ENCODE measurements at regions of chr10 and their contacts with region 1.

Region 1: DNA sequence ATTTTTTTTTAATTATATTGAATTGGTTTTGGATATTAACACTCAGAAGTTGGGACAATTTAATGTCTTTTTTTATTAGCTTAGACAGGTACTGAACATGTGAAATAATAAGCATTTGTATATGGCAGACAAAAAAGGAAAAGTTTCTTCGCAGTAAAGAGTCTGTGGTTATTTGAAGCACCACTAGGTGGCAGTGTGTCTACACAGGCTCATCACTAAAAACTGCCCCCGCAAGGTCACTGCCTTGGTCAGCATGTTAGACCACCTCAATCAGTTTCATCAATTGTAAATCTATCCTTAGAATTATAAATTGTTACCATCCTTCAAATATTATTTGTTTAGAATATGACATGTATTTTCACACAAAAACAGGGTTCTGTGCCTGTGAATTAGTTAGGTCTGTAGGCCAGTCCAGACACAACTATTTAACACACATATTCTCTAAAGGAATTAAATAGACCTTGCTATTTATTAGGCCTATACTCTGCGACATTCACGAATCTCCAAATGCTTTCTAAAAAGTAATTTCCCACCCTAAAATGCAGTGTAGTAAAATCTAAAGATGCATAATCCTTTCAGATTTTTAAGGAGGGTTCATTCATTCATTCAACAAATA is 17.0 kb downstream of the PNLIPRP3 start:
- DNase-seq: peak; percentile 29
- ATAC-seq: no peak
- H3K4me3 Mint-ChIP-seq: no peak overlapping the region
- H3K27ac Mint-ChIP-seq: no peak overlapping the region
- H3K4me1 Mint-ChIP-seq: no peaks in the 10 kb centered on the region
- H3K27me3 Mint-ChIP-seq: peaks cover 8% of the 10 kb centered on the region

Region 2: DNA sequence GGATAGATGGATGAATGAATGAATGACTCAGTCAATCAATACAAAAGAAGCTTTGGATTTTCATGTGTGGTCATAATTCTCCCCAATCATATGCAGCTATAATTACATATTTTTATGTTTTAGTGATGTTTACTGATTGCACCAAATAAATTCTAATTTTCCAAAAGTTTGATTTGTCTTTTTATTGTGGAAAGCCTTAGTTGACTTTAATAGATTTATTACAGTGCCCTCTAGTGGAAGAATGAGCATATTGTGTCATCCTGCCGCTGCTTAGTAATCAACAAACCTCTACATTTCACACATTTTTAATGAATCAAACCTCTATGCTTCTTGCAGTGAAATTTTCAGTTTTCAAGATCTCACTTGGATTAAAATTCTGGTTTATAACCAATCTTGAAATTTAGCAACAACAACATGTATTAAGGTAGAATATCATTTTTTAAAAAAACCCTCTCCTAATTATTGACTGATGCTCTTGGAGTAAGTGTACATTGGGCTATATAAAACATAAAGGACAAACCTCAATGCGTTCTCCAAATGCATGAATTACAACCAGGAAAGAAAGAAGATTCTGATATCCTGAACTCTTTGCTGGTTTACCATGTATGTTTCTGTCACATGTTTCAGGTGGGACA is 45.5 kb after region 1 on chr10:
- CTCF ChIA-PET with region 1: no interaction called
- POLR2A ChIA-PET with region 1: no interaction called
- intact Hi-C with region 1: loop called in 1 of 2 experiments (anchors 1 kb)
- DNase-seq: no peak
- ATAC-seq: no peak
- H3K4me3 Mint-ChIP-seq: no peak overlapping the region
- H3K27ac Mint-ChIP-seq: no peak overlapping the region
- H3K4me1 Mint-ChIP-seq: no peaks in the 10 kb centered on the region
- H3K27me3 Mint-ChIP-seq: peaks cover 11% of the 10 kb centered on the region

Region 3: GRCh38 chr10:116521404-116522290 is 77.0 kb after region 1 on chr10:
- CTCF ChIA-PET with region 1: interaction called, 4 read pairs
- POLR2A ChIA-PET with region 1: no interaction called
- intact Hi-C with region 1: loop called in 1 of 2 experiments (anchors 1 kb)
- DNase-seq: peak; percentile 47
- ATAC-seq: no peak
- H3K4me3 Mint-ChIP-seq: no peak overlapping the region
- H3K27ac Mint-ChIP-seq: no peak overlapping the region
- H3K4me1 Mint-ChIP-seq: no peaks in the 10 kb centered on the region
- H3K27me3 Mint-ChIP-seq: peaks cover 4% of the 10 kb centered on the region

Measured in activated CD4-positive, alpha-beta T cell treated with anti-CD3 and anti-CD28 coated beads for 36 hours (primary cell).